BJ (cell line): ENCODE measurements at regions of chr11 and their contacts with region 1.

Region 1: GRCh38 chr11:88016392-88017170 is 158.7 kb downstream of the RAB38 start:
- DNase-seq: peak; percentile 47
- H3K4me3 ChIP-seq: no peak overlapping the region
- H3K27me3 ChIP-seq: no peaks in the 10 kb centered on the region
- CTCF ChIP-seq: peak; percentile 77

Region 2: DNA sequence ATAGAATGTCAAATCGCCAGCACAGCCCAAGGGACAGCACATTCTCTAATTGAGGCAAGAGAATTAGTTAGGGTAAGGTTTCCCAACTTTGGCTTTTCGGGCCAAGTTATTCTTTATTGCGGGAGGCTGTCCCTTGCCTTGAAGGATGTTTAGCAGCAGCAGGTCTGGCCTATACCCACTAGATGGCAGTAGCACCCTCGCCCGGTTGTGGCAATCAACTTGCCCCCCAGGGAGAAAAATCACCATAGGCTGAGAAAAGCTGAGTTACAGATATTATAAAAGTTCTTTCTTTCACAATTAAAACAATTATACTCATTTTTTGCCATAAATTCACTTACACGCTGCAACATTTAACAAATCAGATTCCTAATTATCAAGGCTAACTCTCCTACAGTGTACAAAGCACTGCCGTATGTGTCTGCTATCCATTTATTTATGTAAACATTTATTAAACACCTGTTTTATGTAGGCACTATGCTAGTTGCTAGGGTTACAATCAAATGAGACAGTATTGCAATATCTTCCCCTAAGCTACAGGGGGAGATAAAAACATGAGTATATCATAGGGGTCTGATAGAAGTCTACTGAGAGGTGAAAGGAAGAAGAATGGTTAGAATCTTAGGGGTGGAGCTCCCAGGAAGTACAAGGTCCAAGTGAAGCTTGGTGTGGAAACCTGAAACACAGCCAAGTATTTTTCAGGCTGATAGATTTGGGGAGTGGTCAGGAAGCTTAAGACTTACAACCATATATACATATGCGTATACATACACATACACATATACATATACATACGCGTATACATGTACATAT is 293.6 kb before region 1 on chr11:
- CTCF ChIA-PET with region 1: interaction called, 15 read pairs
- POLR2A ChIA-PET with region 1: no interaction called
- DNase-seq: no peak
- H3K4me3 ChIP-seq: no peak overlapping the region
- H3K27me3 ChIP-seq: no peaks in the 10 kb centered on the region
- CTCF ChIP-seq: peak; percentile 88

Region 3: DNA sequence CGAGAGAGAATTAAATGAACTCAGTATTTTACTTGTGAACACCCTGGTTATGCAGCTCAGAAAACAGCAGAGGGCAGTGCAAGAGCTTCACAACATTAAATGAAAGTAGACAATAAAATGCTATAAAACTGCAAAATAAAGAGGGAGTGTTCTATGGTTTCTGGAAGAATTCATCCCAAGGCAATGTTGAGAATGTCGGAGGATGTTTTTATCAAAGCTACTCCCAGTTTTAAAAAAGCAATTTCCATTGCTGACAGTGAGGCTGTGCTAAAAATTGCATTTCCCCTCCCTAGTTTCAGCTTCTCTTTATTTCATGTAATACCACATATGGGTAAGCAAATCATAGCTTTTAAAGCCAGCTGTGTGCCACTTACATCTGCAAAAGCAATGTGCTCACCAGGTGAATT is 138.2 kb before region 1 on chr11:
- CTCF ChIA-PET with region 1: interaction called, 15 read pairs
- POLR2A ChIA-PET with region 1: no interaction called
- DNase-seq: peak; percentile 79
- H3K4me3 ChIP-seq: no peak overlapping the region
- H3K27me3 ChIP-seq: no peaks in the 10 kb centered on the region
- CTCF ChIP-seq: peak; percentile 71

Region 4: DNA sequence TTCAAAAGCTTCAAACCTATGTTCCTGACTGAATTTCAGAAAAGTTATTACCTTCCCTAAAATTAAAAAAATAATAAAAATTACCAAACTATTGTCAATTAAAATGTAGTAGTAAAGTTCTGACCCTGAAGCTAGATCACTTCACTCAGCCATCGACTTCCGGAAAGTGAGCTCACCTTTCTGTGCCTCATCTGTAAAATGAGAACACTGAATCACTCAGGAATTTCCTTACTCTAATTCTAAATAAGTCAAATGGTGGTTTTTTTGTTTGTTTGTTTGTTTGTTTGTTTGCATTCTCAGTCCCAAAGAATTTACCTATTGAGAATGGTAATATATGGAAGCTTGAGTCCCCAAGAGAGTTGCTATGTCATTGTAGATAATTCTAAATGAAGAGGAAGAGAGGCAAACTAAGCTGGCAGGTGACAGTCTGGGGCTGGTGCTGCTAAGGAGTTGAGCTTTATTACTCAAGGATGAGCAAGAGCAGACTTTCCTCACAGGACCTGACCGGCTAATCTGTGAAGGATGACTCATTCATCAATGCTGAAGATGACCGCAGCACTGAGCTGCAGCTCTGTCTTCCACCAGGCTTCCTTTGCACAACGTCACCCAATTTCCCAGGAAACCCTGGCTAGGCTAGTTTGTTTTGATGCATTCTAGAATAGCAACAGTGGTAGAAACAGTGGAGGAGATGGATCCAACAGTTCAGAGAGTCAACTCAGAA is 90.2 kb before region 1 on chr11:
- CTCF ChIA-PET with region 1: no interaction called
- POLR2A ChIA-PET with region 1: no interaction called
- DNase-seq: peak; percentile 62
- H3K4me3 ChIP-seq: no peak overlapping the region
- H3K27me3 ChIP-seq: no peaks in the 10 kb centered on the region
- CTCF ChIP-seq: no peak

Region 5: GRCh38 chr11:88231894-88232482 is 215.4 kb after region 1 on chr11:
- CTCF ChIA-PET with region 1: interaction called, 13 read pairs
- POLR2A ChIA-PET with region 1: no interaction called
- DNase-seq: no peak
- H3K4me3 ChIP-seq: no peak overlapping the region
- H3K27me3 ChIP-seq: no peaks in the 10 kb centered on the region
- CTCF ChIP-seq: peak; percentile 74

Region 6: GRCh38 chr11:88535916-88536547 is 519.5 kb after region 1 on chr11:
- CTCF ChIA-PET with region 1: interaction called, 59 read pairs
- POLR2A ChIA-PET with region 1: no interaction called
- DNase-seq: peak; percentile 77
- H3K4me3 ChIP-seq: no peak overlapping the region
- H3K27me3 ChIP-seq: no peaks in the 10 kb centered on the region
- CTCF ChIP-seq: no peak

Region 7: DNA sequence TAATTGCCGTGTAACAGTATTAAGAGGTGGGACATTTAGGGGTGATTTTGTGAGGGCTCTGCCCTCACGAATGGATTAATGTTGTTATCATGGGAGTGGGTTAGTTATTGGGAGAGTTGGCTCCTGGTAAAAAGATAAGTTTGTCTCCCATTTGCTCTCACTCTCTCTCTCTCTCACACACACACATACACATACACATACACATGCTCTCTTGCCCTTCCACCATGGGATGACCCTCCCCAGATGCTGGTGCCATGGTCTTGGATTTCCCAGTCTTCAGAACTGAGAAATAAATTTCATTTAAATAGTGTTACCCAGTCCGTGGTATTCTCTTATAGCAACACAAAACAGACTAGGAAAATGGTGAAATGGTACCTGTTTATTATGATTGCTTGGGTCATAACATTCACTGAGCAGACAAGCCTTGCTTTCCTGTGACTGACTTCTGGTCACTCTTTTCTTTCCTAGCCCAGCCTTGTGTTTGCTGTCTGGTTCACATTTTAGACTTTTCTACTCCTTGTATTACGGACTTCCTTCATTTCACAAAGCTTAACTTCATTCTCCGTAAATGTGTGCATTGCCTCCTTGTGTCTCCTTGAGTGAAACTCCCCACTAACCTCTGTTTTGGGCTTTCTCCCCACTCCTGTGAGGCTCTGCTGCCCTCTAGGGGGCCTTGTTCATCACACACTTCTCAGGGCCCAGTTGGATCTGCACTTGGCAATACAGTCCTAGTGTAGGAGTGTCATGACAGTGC is 527.5 kb after region 1 on chr11:
- CTCF ChIA-PET with region 1: interaction called, 59 read pairs
- POLR2A ChIA-PET with region 1: no interaction called
- DNase-seq: peak; percentile 69
- H3K4me3 ChIP-seq: no peak overlapping the region
- H3K27me3 ChIP-seq: no peaks in the 10 kb centered on the region
- CTCF ChIP-seq: peak; percentile 98

Region 8: GRCh38 chr11:88552377-88553062 is 535.9 kb after region 1 on chr11:
- CTCF ChIA-PET with region 1: interaction called, 42 read pairs
- POLR2A ChIA-PET with region 1: no interaction called
- DNase-seq: no peak
- H3K4me3 ChIP-seq: no peak overlapping the region
- H3K27me3 ChIP-seq: no peaks in the 10 kb centered on the region
- CTCF ChIP-seq: peak; percentile 75